CD4-positive, alpha-beta memory T cell (primary cell): ENCODE measurements at regions of chr15 and their contacts with region 1.

Region 1: DNA sequence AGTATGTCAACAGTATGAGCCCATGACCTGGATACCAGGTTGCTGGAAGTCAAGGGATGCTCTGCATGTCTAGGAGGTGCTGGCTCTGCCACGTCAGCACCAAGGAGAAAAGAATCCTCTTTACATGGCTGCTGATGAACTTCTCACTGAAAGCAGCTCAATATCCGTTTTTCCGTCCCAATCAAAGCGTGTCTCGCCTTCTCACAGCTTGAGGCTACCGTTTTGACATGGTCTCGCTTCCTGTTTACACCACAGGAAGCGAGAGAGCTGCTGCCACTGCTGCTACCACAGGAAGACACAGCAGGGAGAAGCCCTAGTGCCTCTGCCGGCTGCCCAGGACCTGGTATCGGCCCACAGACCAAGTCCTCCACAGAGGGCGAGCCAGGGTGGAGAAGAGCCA is 27.3 kb downstream of the STARD5 start:
- DNase-seq: peak; percentile 79 to 89 (median 84)
- H3K4me3 ChIP-seq: peak overlapping the region; percentile 77 to 87
- H3K4me3 Mint-ChIP-seq: peak overlapping the region; percentile 98 to 100 (median 100)
- H3K27ac ChIP-seq: peak overlapping the region; percentile 91
- H3K27ac Mint-ChIP-seq: peak overlapping the region; percentile 96 to 99 (median 98)
- H3K4me1 ChIP-seq: peaks cover 60% of the 10 kb centered on the region
- H3K4me1 Mint-ChIP-seq: peaks cover 48 to 82% (median 55%) of the 10 kb centered on the region in 4 donors
- H3K27me3 ChIP-seq: no peaks in the 10 kb centered on the region
- H3K27me3 Mint-ChIP-seq: no peaks in the 10 kb centered on the region

Region 2: GRCh38 chr15:79923515-79924395 is 1372.9 kb before region 1 on chr15:
- CTCF ChIA-PET with region 1: no interaction called
- POLR2A ChIA-PET with region 1: no interaction called
- intact Hi-C with region 1: loop called (anchors 2 kb)
- DNase-seq: peak; percentile 97 to 100 (median 99)
- H3K4me3 ChIP-seq: peak overlapping the region; percentile 88 to 91
- H3K4me3 Mint-ChIP-seq: peak overlapping the region; percentile 90 to 94 (median 92)
- H3K27ac ChIP-seq: peak overlapping the region; percentile 85
- H3K27ac Mint-ChIP-seq: peak overlapping the region; percentile 95 to 99 (median 97)
- H3K4me1 ChIP-seq: peaks cover 20% of the 10 kb centered on the region
- H3K4me1 Mint-ChIP-seq: peaks cover 10 to 31% (median 22%) of the 10 kb centered on the region in 4 donors
- H3K27me3 ChIP-seq: no peaks in the 10 kb centered on the region
- H3K27me3 Mint-ChIP-seq: no peaks in the 10 kb centered on the region

Region 3: GRCh38 chr15:80875568-80876347 is 420.9 kb before region 1 on chr15:
- CTCF ChIA-PET with region 1: no interaction called
- POLR2A ChIA-PET with region 1: no interaction called
- intact Hi-C with region 1: no loop called
- DNase-seq: no peak
- H3K4me3 ChIP-seq: no peak overlapping the region
- H3K4me3 Mint-ChIP-seq: no peak overlapping the region
- H3K27ac ChIP-seq: no peak overlapping the region
- H3K27ac Mint-ChIP-seq: no peak overlapping the region
- H3K4me1 ChIP-seq: no peaks in the 10 kb centered on the region
- H3K4me1 Mint-ChIP-seq: no peaks in the 10 kb centered on the region
- H3K27me3 ChIP-seq: no peaks in the 10 kb centered on the region
- H3K27me3 Mint-ChIP-seq: peaks cover 8 to 10% of the 10 kb centered on the region in 2 donors

Region 4: DNA sequence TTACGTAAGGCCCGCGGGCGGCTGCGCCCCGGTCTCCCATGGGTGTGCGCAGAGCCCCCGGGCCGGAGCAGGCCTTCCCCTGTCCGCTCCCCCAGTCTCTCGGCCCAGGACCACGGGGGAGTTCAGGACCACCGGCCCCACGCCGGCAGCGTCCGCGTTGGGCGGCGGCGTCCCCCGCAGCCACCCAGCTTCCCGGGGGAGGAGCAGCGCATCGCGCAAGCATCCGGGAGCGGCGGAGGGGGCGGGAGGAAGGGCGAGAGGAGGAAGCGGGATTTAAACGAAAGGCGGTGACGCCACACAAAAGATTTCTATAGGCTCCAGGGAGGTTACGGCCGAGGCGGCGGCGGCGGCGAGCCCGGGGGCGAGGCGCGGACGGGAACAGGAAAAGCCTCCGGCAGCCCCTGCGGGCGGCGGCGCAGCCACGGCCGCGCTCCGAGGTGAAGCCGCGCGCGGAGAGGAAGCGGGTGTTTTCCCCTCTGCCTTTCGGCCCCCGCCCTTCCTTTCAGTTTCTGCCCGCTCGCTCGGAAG is 296.0 kb before region 1 on chr15 and contains the start of gene TLNRD1:
- CTCF ChIA-PET with region 1: no interaction called
- POLR2A ChIA-PET with region 1: interaction called, 27 read pairs
- intact Hi-C with region 1: loop called (anchors 10 kb)
- DNase-seq: peak; percentile 85 to 89 (median 87)
- H3K4me3 ChIP-seq: peak within 1 kb of the TSS; percentile 39 to 91
- H3K4me3 Mint-ChIP-seq: peak within 1 kb of the TSS; percentile 93 to 98 (median 96)
- H3K27ac ChIP-seq: peak within 1 kb of the TSS; percentile 95
- H3K27ac Mint-ChIP-seq: peak within 1 kb of the TSS; percentile 97 to 99 (median 98)
- H3K4me1 ChIP-seq: peaks cover 42% of the 10 kb centered on the region
- H3K4me1 Mint-ChIP-seq: peaks cover 34 to 63% (median 53%) of the 10 kb centered on the region in 4 donors
- H3K27me3 ChIP-seq: no peaks in the 10 kb centered on the region
- H3K27me3 Mint-ChIP-seq: peaks cover 0 to 1% of the 10 kb centered on the region in 2 donors
- total RNA-seq, gene TLNRD1: 29.7 to 29.8 TPM

Region 5: DNA sequence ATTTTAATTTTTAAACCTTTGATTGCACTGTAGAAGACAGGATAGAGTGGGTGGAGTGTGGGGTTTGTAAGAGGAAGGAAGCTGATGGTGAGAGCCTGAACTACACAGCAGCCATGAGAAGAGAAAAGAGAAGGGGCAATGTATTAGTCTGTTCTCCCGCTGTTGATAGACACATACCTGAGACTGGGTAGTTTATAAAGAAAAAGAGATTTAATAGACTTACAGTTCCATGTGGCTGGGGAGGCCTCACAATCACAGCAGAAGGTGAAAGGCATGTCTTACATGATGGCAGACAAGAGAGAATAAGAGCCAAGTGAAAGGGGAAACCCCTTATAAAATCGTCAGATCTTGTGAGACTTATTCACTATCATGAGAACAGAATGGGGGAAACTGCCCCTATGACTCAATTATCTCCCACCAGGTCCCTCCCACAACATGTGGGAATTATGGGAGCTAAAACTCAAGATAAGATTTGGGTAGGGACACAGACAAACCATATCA is 10.0 kb before region 1 on chr15:
- CTCF ChIA-PET with region 1: interaction called, 19 read pairs
- POLR2A ChIA-PET with region 1: interaction called, 702 read pairs
- intact Hi-C with region 1: loop called (anchors 1 kb)
- DNase-seq: peak; percentile 57 to 62 (median 60)
- H3K4me3 ChIP-seq: peak overlapping the region in 1 of 2 donors; percentile 32
- H3K4me3 Mint-ChIP-seq: peak overlapping the region; percentile 22 to 86 (median 76)
- H3K27ac ChIP-seq: peak overlapping the region; percentile 58
- H3K27ac Mint-ChIP-seq: peak overlapping the region; percentile 93 to 99 (median 97)
- H3K4me1 ChIP-seq: peaks cover 75% of the 10 kb centered on the region
- H3K4me1 Mint-ChIP-seq: peaks cover 59 to 81% (median 71%) of the 10 kb centered on the region in 4 donors
- H3K27me3 ChIP-seq: no peaks in the 10 kb centered on the region
- H3K27me3 Mint-ChIP-seq: no peaks in the 10 kb centered on the region

Region 6: GRCh38 chr15:81312790-81313543 is 16.3 kb after region 1 on chr15:
- CTCF ChIA-PET with region 1: interaction called, 6 read pairs
- POLR2A ChIA-PET with region 1: interaction called, 702 read pairs
- intact Hi-C with region 1: no loop called
- DNase-seq: no peak
- H3K4me3 ChIP-seq: no peak overlapping the region
- H3K4me3 Mint-ChIP-seq: no peak overlapping the region
- H3K27ac ChIP-seq: no peak overlapping the region
- H3K27ac Mint-ChIP-seq: peak overlapping the region in 5 of 7 donors; percentile 26 to 97 (median 83)
- H3K4me1 ChIP-seq: peaks cover 54% of the 10 kb centered on the region
- H3K4me1 Mint-ChIP-seq: peaks cover 43 to 77% (median 64%) of the 10 kb centered on the region in 4 donors
- H3K27me3 ChIP-seq: no peaks in the 10 kb centered on the region
- H3K27me3 Mint-ChIP-seq: no peaks in the 10 kb centered on the region

Region 7: GRCh38 chr15:81323944-81324881 is 27.5 kb after region 1 on chr15 and contains the start of gene STARD5:
- CTCF ChIA-PET with region 1: interaction called, 6 read pairs
- POLR2A ChIA-PET with region 1: interaction called, 702 read pairs
- intact Hi-C with region 1: loop called (anchors 1 kb)
- DNase-seq: peak; percentile 91 to 95 (median 92)
- H3K4me3 ChIP-seq: peak within 1 kb of the TSS; percentile 76 to 87
- H3K4me3 Mint-ChIP-seq: peak within 1 kb of the TSS; percentile 92 to 99 (median 96)
- H3K27ac ChIP-seq: peak within 1 kb of the TSS; percentile 55
- H3K27ac Mint-ChIP-seq: peak within 1 kb of the TSS; percentile 83 to 97 (median 94)
- H3K4me1 ChIP-seq: peaks cover 29% of the 10 kb centered on the region
- H3K4me1 Mint-ChIP-seq: peaks cover 19 to 33% (median 25%) of the 10 kb centered on the region in 4 donors
- H3K27me3 ChIP-seq: no peaks in the 10 kb centered on the region
- H3K27me3 Mint-ChIP-seq: no peaks in the 10 kb centered on the region
- total RNA-seq, gene STARD5: 5.0 to 8.0 TPM

Region 8: DNA sequence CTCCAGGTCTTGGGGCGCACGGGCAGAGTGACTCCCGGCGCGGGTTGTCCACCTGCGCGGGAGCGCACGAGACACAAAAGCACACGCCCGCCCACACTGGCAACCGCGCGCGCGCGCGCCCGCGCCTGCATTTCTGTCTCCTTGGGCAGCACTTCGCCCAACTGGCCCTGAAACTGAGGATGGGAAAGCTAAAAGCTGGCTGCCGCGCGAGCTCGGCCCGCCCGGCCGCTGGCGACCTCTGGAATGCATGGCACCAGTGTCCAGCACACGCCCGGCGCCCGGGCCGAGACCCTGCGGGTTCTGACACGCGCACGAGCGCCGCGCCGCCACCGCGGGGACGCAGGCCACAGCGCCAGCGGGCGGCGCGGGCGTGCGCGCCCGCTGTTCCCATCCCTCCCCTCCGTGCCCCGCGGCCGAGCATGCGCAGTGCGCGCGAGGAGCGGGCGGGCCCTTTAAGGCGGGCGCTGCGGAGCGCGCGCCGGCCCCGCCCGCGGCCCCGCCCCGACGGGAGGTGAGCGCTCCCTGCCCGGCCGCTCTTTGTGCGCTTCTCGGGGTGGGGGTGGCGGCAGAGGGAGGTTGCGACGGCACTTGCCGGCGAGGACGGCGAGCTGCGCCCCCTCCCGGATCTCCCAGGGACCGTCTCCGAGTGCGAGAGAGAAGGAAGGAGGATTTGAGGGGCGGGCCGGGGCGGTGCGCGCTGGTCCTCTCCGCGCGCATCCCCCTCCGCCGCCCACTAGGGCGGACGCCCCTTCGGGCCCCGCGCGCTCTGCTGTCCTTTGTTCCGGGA is 750.2 kb after region 1 on chr15:
- CTCF ChIA-PET with region 1: no interaction called
- POLR2A ChIA-PET with region 1: no interaction called
- intact Hi-C with region 1: loop called (anchors 5 kb)
- DNase-seq: peak; percentile 86 to 91 (median 90)
- H3K4me3 ChIP-seq: peak overlapping the region; percentile 69 to 75
- H3K4me3 Mint-ChIP-seq: peak overlapping the region; percentile 86 to 94 (median 91)
- H3K27ac ChIP-seq: peak overlapping the region; percentile 69
- H3K27ac Mint-ChIP-seq: peak overlapping the region; percentile 17 to 98 (median 88)
- H3K4me1 ChIP-seq: peaks cover 19% of the 10 kb centered on the region
- H3K4me1 Mint-ChIP-seq: peaks cover 4 to 24% (median 14%) of the 10 kb centered on the region in 4 donors
- H3K27me3 ChIP-seq: no peaks in the 10 kb centered on the region
- H3K27me3 Mint-ChIP-seq: peaks cover 4 to 9% of the 10 kb centered on the region in 2 donors